PC-3 (cell line): ENCODE measurements at regions of chr1 and their contacts with region 1.

Region 1: DNA sequence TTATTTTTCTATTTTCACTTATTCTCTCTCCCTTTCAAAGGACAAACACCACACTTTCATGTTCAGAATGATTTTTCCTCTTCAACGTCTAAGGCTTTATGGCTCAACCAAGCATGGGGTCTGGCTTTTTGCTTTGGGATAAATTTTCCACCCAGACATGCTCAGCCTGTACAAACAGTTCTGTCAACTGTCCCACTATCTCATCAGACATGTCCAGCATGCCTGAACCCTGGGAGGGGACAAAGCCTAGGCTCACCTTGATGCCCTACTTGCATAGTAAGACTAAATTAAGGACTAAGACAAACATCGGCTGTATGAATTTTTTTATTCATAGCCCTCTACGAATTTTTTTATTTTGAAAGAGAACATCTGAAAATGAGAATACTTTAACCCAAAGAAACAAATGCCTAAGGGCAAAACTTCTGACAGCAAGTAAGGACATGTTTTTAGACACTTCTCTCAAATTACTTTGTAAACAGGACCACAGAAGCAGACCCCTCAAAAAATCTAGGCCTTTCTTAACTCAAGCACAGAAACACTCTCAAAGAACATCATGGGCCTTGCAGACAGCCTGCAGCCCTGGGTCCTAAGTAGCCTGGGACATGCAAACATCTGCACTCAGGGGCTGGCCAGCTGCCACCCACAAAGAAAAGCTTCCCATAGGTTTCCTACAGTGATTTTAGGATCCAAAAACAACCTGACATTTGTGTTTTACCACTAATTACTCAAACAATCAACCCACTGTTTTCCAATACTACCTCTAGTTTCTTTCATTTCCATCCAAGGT is 72.3 kb upstream of the PALMD start:
- DNase-seq: no peak
- ATAC-seq: no peak
- H3K4me3 ChIP-seq: no peak overlapping the region
- H3K27ac ChIP-seq: no peak overlapping the region
- H3K4me1 ChIP-seq: peaks cover 33% of the 10 kb centered on the region
- H3K27me3 ChIP-seq: no peaks in the 10 kb centered on the region
- CTCF ChIP-seq: no peak

Region 2: DNA sequence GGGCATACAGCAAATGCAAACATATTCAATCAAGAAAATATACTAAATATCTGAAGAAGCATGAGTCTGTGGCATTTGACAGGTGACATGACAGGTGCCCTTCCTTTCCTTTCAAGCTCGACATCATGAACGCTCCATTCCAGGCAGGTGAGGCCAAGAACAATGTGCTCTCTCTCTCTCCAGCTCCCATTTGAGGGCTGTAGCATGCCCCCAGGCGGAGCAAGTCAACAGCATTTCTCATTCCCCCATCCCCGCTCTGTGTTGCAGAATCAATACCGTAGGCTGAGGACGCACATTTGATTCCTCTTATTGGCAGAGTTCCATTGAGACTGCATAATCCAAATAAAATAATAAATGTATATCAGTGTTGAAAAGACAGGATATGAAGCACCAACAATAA is 333.9 kb before region 1 on chr1:
- CTCF ChIA-PET with region 1: no interaction called
- POLR2A ChIA-PET with region 1: no interaction called
- intact Hi-C with region 1: no loop called
- DNase-seq: no peak
- ATAC-seq: no peak
- H3K4me3 ChIP-seq: no peak overlapping the region
- H3K27ac ChIP-seq: no peak overlapping the region
- H3K4me1 ChIP-seq: no peaks in the 10 kb centered on the region
- H3K27me3 ChIP-seq: no peaks in the 10 kb centered on the region
- CTCF ChIP-seq: no peak

Region 3: DNA sequence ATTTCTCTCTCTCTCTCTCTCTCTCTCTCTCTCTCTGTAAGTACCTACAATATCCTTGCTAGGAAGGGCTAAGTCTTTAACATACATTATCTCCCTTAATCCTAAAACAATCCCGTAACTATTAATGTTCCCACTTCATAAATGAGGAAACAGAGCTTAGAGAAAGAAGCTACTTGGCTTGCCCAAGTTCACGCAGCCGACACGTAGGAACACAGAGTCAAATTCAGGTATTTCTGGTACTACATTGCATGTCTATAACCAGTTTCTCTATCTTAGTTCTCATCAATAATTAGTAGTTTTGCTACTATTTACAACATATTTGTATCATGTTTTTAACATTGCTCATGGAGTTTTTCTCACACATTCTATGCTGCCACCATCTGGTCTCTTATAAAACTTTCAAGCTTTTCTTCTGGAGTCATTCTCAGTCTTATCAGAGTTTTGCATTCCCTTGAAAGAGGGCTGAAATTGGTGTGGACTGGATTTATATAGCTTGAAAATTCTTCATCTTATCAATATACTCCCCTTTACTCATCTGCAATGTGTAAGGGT is 46.6 kb before region 1 on chr1:
- CTCF ChIA-PET with region 1: no interaction called
- POLR2A ChIA-PET with region 1: no interaction called
- intact Hi-C with region 1: loop called (anchors 5 kb)
- DNase-seq: peak; percentile 51
- ATAC-seq: peak; percentile 43; the same call in 1 of the 2 replicates
- H3K4me3 ChIP-seq: no peak overlapping the region
- H3K27ac ChIP-seq: no peak overlapping the region
- H3K4me1 ChIP-seq: no peaks in the 10 kb centered on the region
- H3K27me3 ChIP-seq: no peaks in the 10 kb centered on the region
- CTCF ChIP-seq: peak; percentile 72

Region 4: DNA sequence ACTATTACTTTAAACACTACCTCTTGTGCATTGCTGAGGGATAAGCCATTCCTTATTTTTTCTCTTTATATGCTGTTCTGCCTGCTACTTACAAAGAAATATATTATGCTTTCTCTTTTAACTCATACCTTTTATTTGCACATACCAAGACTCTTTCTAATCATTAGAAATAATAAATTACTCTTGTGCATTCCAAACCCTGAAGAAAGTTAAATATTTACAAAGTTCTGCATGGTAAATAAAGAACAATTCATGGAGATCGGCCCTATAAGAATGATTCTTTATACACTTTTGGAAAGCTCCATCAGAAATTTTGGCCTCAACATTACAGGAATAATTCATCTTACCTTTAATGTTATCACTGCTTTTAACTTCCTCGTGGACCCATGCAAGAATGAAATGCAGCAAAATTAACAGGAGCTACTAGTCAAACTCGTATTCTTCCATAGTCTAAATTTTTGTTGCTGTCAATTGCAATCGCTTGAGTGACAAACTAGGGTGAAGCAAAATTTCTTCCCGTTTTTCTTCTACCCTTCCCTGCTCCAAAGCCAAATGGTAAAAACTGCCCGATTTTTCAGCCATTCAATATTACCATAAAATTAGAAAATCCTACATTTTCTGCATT is 14.3 kb before region 1 on chr1:
- CTCF ChIA-PET with region 1: no interaction called
- POLR2A ChIA-PET with region 1: no interaction called
- intact Hi-C with region 1: loop called (anchors 1 kb)
- DNase-seq: peak; percentile 80
- ATAC-seq: peak; percentile 72
- H3K4me3 ChIP-seq: peak overlapping the region; percentile 40
- H3K27ac ChIP-seq: peak overlapping the region; percentile 96
- H3K4me1 ChIP-seq: peaks cover 52% of the 10 kb centered on the region
- H3K27me3 ChIP-seq: no peaks in the 10 kb centered on the region
- CTCF ChIP-seq: no peak

Region 5: GRCh38 chr1:99590578-99591209 is 17.1 kb after region 1 on chr1:
- CTCF ChIA-PET with region 1: no interaction called
- POLR2A ChIA-PET with region 1: no interaction called
- intact Hi-C with region 1: loop called (anchors 1 kb)
- DNase-seq: peak; percentile 91
- ATAC-seq: peak; percentile 99
- H3K4me3 ChIP-seq: peak overlapping the region; percentile 14; the same call in 1 of the 2 replicates
- H3K27ac ChIP-seq: peak overlapping the region; percentile 94
- H3K4me1 ChIP-seq: peaks cover 22% of the 10 kb centered on the region
- H3K27me3 ChIP-seq: no peaks in the 10 kb centered on the region
- CTCF ChIP-seq: no peak

Region 6: GRCh38 chr1:99717005-99717404 is 143.4 kb after region 1 on chr1:
- CTCF ChIA-PET with region 1: no interaction called
- POLR2A ChIA-PET with region 1: no interaction called
- intact Hi-C with region 1: no loop called
- DNase-seq: no peak
- ATAC-seq: no peak
- H3K4me3 ChIP-seq: no peak overlapping the region
- H3K27ac ChIP-seq: no peak overlapping the region
- H3K4me1 ChIP-seq: peaks cover 10% of the 10 kb centered on the region
- H3K27me3 ChIP-seq: no peaks in the 10 kb centered on the region
- CTCF ChIP-seq: no peak

Region 7: DNA sequence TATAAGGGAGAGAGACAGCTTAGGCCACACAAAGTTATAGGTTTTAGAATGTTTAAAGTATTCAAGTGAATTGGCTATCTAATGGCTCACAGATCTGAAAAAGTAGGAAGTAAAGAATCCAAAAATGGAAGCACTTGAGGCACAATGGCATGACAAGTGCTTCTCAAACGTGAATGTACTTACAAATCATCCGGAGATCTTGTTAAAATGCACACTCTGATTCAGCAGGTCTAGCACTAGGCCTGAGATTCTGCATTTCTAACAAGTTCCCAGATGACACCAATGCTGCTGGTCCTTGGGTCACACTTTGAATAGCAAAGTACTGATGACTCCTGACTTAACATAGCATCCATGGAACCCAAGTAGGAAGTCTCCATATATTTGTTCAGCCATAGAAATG is 255.6 kb after region 1 on chr1:
- CTCF ChIA-PET with region 1: no interaction called
- POLR2A ChIA-PET with region 1: no interaction called
- intact Hi-C with region 1: no loop called
- DNase-seq: no peak
- ATAC-seq: no peak
- H3K4me3 ChIP-seq: no peak overlapping the region
- H3K27ac ChIP-seq: no peak overlapping the region
- H3K4me1 ChIP-seq: no peaks in the 10 kb centered on the region
- H3K27me3 ChIP-seq: no peaks in the 10 kb centered on the region
- CTCF ChIP-seq: no peak